CD4-positive, alpha-beta memory T cell (primary cell): ENCODE measurements at regions of chr21 and their contacts with region 1.

Region 1: GRCh38 chr21:14737922-14738321 is 191.8 kb upstream of the SAMSN1 start:
- DNase-seq: peak; percentile 67 to 74 (median 71)
- H3K4me3 ChIP-seq: no peak overlapping the region
- H3K4me3 Mint-ChIP-seq: no peak overlapping the region
- H3K27ac ChIP-seq: no peak overlapping the region
- H3K27ac Mint-ChIP-seq: peak overlapping the region in 1 of 7 donors; percentile 57
- H3K4me1 ChIP-seq: peaks cover 4% of the 10 kb centered on the region
- H3K4me1 Mint-ChIP-seq: peaks cover 0 to 9% (median 8%) of the 10 kb centered on the region in 4 donors
- H3K27me3 ChIP-seq: no peaks in the 10 kb centered on the region
- H3K27me3 Mint-ChIP-seq: no peaks in the 10 kb centered on the region

Region 2: GRCh38 chr21:14403681-14404318 is 334.1 kb before region 1 on chr21:
- CTCF ChIA-PET with region 1: interaction called, 22 read pairs
- POLR2A ChIA-PET with region 1: no interaction called
- intact Hi-C with region 1: loop called (anchors 1 kb)
- DNase-seq: peak in 4 of 5 donors; percentile 32 to 45 (median 38)
- H3K4me3 ChIP-seq: no peak overlapping the region
- H3K4me3 Mint-ChIP-seq: no peak overlapping the region
- H3K27ac ChIP-seq: no peak overlapping the region
- H3K27ac Mint-ChIP-seq: no peak overlapping the region
- H3K4me1 ChIP-seq: no peaks in the 10 kb centered on the region
- H3K4me1 Mint-ChIP-seq: peaks cover 0 to 1% (median 0%) of the 10 kb centered on the region in 4 donors
- H3K27me3 ChIP-seq: no peaks in the 10 kb centered on the region
- H3K27me3 Mint-ChIP-seq: peaks cover 0 to 3% of the 10 kb centered on the region in 2 donors

Region 3: GRCh38 chr21:14523234-14523633 is 214.7 kb before region 1 on chr21:
- CTCF ChIA-PET with region 1: interaction called, 29 read pairs
- POLR2A ChIA-PET with region 1: no interaction called
- intact Hi-C with region 1: loop called (anchors 5 kb)
- DNase-seq: peak in 2 of 5 donors; percentile 24 to 51
- H3K4me3 ChIP-seq: no peak overlapping the region
- H3K4me3 Mint-ChIP-seq: peak overlapping the region; percentile 16 to 92 (median 80)
- H3K27ac ChIP-seq: no peak overlapping the region
- H3K27ac Mint-ChIP-seq: peak overlapping the region; percentile 31 to 92 (median 77)
- H3K4me1 ChIP-seq: peaks cover 76% of the 10 kb centered on the region
- H3K4me1 Mint-ChIP-seq: peaks cover 46 to 70% (median 57%) of the 10 kb centered on the region in 4 donors
- H3K27me3 ChIP-seq: no peaks in the 10 kb centered on the region
- H3K27me3 Mint-ChIP-seq: no peaks in the 10 kb centered on the region

Region 4: GRCh38 chr21:14545906-14546480 is 191.9 kb before region 1 on chr21 and contains the start of gene SAMSN1:
- CTCF ChIA-PET with region 1: interaction called, 6 read pairs
- POLR2A ChIA-PET with region 1: interaction called, 3 read pairs
- intact Hi-C with region 1: loop called (anchors 5 kb)
- DNase-seq: peak; percentile 79 to 90 (median 85)
- H3K4me3 ChIP-seq: peak within 1 kb of the TSS; percentile 48 to 98
- H3K4me3 Mint-ChIP-seq: peak within 1 kb of the TSS; percentile 89 to 99 (median 94)
- H3K27ac ChIP-seq: peak within 1 kb of the TSS; percentile 78
- H3K27ac Mint-ChIP-seq: peak within 1 kb of the TSS; percentile 87 to 97 (median 95)
- H3K4me1 ChIP-seq: peaks cover 78% of the 10 kb centered on the region
- H3K4me1 Mint-ChIP-seq: peaks cover 42 to 79% (median 61%) of the 10 kb centered on the region in 4 donors
- H3K27me3 ChIP-seq: no peaks in the 10 kb centered on the region
- H3K27me3 Mint-ChIP-seq: no peaks in the 10 kb centered on the region
- total RNA-seq, gene SAMSN1: 58.0 to 59.5 TPM

Region 5: GRCh38 chr21:14630556-14631069 is 107.3 kb before region 1 on chr21:
- CTCF ChIA-PET with region 1: interaction called, 6 read pairs
- POLR2A ChIA-PET with region 1: no interaction called
- intact Hi-C with region 1: loop called (anchors 5 kb)
- DNase-seq: peak in 4 of 5 donors; percentile 23 to 41 (median 28)
- H3K4me3 ChIP-seq: no peak overlapping the region
- H3K4me3 Mint-ChIP-seq: peak overlapping the region; percentile 64 to 84 (median 78)
- H3K27ac ChIP-seq: no peak overlapping the region
- H3K27ac Mint-ChIP-seq: peak overlapping the region; percentile 58 to 92 (median 77)
- H3K4me1 ChIP-seq: peaks cover 21% of the 10 kb centered on the region
- H3K4me1 Mint-ChIP-seq: peaks cover 18 to 25% (median 20%) of the 10 kb centered on the region in 4 donors
- H3K27me3 ChIP-seq: no peaks in the 10 kb centered on the region
- H3K27me3 Mint-ChIP-seq: no peaks in the 10 kb centered on the region

Region 6: GRCh38 chr21:14864211-14865021 is 126.5 kb after region 1 on chr21:
- CTCF ChIA-PET with region 1: interaction called, 3 read pairs
- POLR2A ChIA-PET with region 1: no interaction called
- intact Hi-C with region 1: loop called (anchors 5 kb)
- DNase-seq: peak in 2 of 5 donors; percentile 3 to 4
- H3K4me3 ChIP-seq: no peak overlapping the region
- H3K4me3 Mint-ChIP-seq: no peak overlapping the region
- H3K27ac ChIP-seq: no peak overlapping the region
- H3K27ac Mint-ChIP-seq: no peak overlapping the region
- H3K4me1 ChIP-seq: no peaks in the 10 kb centered on the region
- H3K4me1 Mint-ChIP-seq: peaks cover 0 to 1% (median 0%) of the 10 kb centered on the region in 4 donors
- H3K27me3 ChIP-seq: no peaks in the 10 kb centered on the region
- H3K27me3 Mint-ChIP-seq: no peaks in the 10 kb centered on the region

Region 7: GRCh38 chr21:15592271-15592860 is 854.4 kb after region 1 on chr21:
- CTCF ChIA-PET with region 1: no interaction called
- POLR2A ChIA-PET with region 1: no interaction called
- intact Hi-C with region 1: loop called (anchors 5 kb)
- DNase-seq: peak in 4 of 5 donors; percentile 25 to 37 (median 32)
- H3K4me3 ChIP-seq: no peak overlapping the region
- H3K4me3 Mint-ChIP-seq: no peak overlapping the region
- H3K27ac ChIP-seq: no peak overlapping the region
- H3K27ac Mint-ChIP-seq: no peak overlapping the region
- H3K4me1 ChIP-seq: no peaks in the 10 kb centered on the region
- H3K4me1 Mint-ChIP-seq: no peaks in the 10 kb centered on the region
- H3K27me3 ChIP-seq: no peaks in the 10 kb centered on the region
- H3K27me3 Mint-ChIP-seq: peaks cover 6% of the 10 kb centered on the region in 2 donors